Upper lobe of right lung (tissue), 1 donor: ENCODE measurements at regions of chr11 and their contacts with region 1.

Region 1: GRCh38 chr11:66580803-66581202 is 12.1 kb downstream of the CCDC87 start:
- DNase-seq: no peak
- ATAC-seq: no peak
- H3K4me3 ChIP-seq: no peak overlapping the region
- H3K27ac ChIP-seq: no peak overlapping the region
- H3K4me1 ChIP-seq: no peaks in the 10 kb centered on the region
- H3K27me3 ChIP-seq: no peaks in the 10 kb centered on the region
- CTCF ChIP-seq: no peak

Region 2: GRCh38 chr11:66616379-66617154 is 35.8 kb after region 1 on chr11 and contains the start of gene RBM14:
- intact Hi-C with region 1: no loop called
- DNase-seq: peak; percentile 99
- ATAC-seq: peak; percentile 97
- H3K4me3 ChIP-seq: peak within 1 kb of the TSS; percentile 71
- H3K27ac ChIP-seq: peak within 1 kb of the TSS; percentile 94
- H3K4me1 ChIP-seq: peaks cover 39% of the 10 kb centered on the region
- H3K27me3 ChIP-seq: no peaks in the 10 kb centered on the region
- CTCF ChIP-seq: no peak
- total RNA-seq, gene RBM14: 63.3 TPM

Region 3: GRCh38 chr11:66677599-66678375 is 97.0 kb after region 1 on chr11 and contains the start of gene RBM4B:
- intact Hi-C with region 1: loop called (anchors 5 kb)
- DNase-seq: peak; percentile 98
- ATAC-seq: peak; percentile 98
- H3K4me3 ChIP-seq: peak within 1 kb of the TSS; percentile 80
- H3K27ac ChIP-seq: peak within 1 kb of the TSS; percentile 98
- H3K4me1 ChIP-seq: peaks cover 23% of the 10 kb centered on the region
- H3K27me3 ChIP-seq: no peaks in the 10 kb centered on the region
- CTCF ChIP-seq: no peak
- total RNA-seq, gene RBM4B: 9.5 TPM